Activated CD4-positive, alpha-beta T cell treated with anti-CD3 and anti-CD28 coated beads for 36 hours (primary cell): ENCODE measurements at regions of chr3 and their contacts with region 1.

Region 1: DNA sequence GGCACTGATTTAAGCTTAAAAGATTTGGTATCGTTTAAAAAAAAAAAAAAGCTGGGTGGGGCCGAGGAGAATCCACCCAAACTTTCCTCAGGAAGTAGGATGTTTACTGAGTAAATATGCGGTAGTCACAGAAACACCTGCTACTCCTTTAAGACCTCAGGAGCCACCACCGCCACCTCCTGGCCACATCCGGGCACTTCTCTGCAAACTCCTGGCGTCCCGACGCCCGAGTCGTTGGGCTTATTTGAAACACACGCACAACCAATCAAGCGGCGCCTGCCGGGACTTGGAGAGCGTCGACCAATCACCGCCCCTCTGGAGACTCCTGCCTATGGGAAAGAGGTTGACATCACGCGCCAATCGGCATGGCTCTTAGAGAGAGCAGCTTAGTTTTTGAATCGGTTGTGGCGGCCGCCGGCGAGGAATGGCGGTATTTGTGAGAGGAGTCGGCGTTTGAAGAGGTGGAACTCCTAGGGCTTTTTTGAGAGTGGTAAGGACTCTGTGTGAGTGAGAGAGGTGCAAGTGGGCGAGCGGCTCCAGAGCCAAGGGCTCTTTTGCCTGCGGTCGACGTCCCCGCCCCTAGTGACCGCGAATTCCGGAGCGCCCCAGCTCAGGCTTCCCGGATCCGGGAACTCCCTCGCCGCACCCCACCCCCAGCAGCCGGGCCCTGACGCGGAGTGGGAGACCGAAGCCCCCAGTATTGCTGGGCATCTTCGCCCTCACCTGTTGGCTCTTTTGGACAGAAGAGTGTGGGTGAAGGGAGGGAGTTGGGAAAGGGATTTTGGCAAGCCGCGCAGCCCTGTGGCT is at the start of gene ECT2:
- DNase-seq: peak; percentile 99
- ATAC-seq: peak; percentile 100
- H3K4me3 Mint-ChIP-seq: peak within 1 kb of the TSS; percentile 98
- H3K27ac Mint-ChIP-seq: peak within 1 kb of the TSS; percentile 99
- H3K4me1 Mint-ChIP-seq: peaks cover 21% of the 10 kb centered on the region
- H3K27me3 Mint-ChIP-seq: no peaks in the 10 kb centered on the region
- total RNA-seq, gene ECT2: 39.4 to 40.6 TPM

Region 2: GRCh38 chr3:170869645-170870593 is 1880.7 kb before region 1 on chr3 and contains the start of gene RPL22L1:
- CTCF ChIA-PET with region 1: no interaction called
- POLR2A ChIA-PET with region 1: no interaction called
- intact Hi-C with region 1: loop called in 1 of 2 experiments (anchors 2 kb)
- DNase-seq: peak; percentile 96
- ATAC-seq: peak; percentile 95
- H3K4me3 Mint-ChIP-seq: peak within 1 kb of the TSS; percentile 94
- H3K27ac Mint-ChIP-seq: peak within 1 kb of the TSS; percentile 99
- H3K4me1 Mint-ChIP-seq: peaks cover 15% of the 10 kb centered on the region
- H3K27me3 Mint-ChIP-seq: no peaks in the 10 kb centered on the region
- total RNA-seq, gene RPL22L1: 186 to 441 TPM

Region 3: GRCh38 chr3:170908235-170909116 is 1842.1 kb before region 1 on chr3 and contains the start of gene EIF5A2:
- CTCF ChIA-PET with region 1: no interaction called
- POLR2A ChIA-PET with region 1: no interaction called
- intact Hi-C with region 1: loop called in 1 of 2 experiments (anchors 5 kb)
- DNase-seq: peak; percentile 98
- ATAC-seq: peak; percentile 98
- H3K4me3 Mint-ChIP-seq: peak within 1 kb of the TSS; percentile 75
- H3K27ac Mint-ChIP-seq: peak within 1 kb of the TSS; percentile 91
- H3K4me1 Mint-ChIP-seq: peaks cover 16% of the 10 kb centered on the region
- H3K27me3 Mint-ChIP-seq: no peaks in the 10 kb centered on the region
- total RNA-seq, gene EIF5A2: 4.7 to 5.7 TPM

Region 4: DNA sequence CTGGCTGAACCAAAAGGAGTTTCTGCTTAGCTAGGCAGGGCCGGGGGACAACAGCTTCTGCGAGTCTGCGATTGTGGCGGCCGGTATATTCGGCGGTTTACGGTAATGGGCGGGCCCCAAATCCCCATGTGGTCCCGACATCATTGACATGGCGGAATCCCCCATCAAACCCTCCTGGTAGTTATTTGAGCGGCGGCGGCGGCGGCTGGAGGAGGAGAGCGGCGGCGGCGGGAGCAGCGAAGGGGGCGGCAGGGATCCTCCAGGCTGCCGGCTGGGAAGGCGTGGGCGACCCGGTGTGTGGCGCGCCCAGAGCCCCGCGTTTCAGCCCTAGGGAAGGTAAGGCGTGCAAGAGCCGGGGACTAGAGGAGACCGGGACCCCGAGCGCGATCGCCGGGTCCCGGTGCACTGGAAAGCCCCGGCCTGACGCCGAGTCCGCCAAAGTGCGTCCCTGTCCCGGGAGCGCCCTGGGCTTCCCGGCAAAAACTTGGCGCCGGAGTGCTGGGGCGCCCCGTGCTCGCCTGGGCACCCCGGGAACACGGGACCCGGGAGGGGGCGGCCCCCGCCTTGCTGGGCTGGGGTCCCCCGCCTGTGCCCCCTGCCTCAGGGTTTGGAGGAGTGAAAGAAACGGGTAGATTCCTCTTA is 711.0 kb before region 1 on chr3 and contains the start of gene FNDC3B:
- CTCF ChIA-PET with region 1: interaction called, 4 read pairs
- POLR2A ChIA-PET with region 1: no interaction called
- intact Hi-C with region 1: loop called in 1 of 2 experiments (anchors 5 kb)
- DNase-seq: peak; percentile 95
- ATAC-seq: peak; percentile 93
- H3K4me3 Mint-ChIP-seq: peak within 1 kb of the TSS; percentile 86
- H3K27ac Mint-ChIP-seq: peak within 1 kb of the TSS; percentile 88
- H3K4me1 Mint-ChIP-seq: peaks cover 24% of the 10 kb centered on the region
- H3K27me3 Mint-ChIP-seq: peaks cover 2% of the 10 kb centered on the region
- total RNA-seq, gene FNDC3B: 10.5 to 14.2 TPM

Region 5: GRCh38 chr3:172522871-172523818 is 227.4 kb before region 1 on chr3 and contains the start of gene TNFSF10:
- CTCF ChIA-PET with region 1: no interaction called
- POLR2A ChIA-PET with region 1: no interaction called
- intact Hi-C with region 1: loop called in 1 of 2 experiments (anchors 2 kb)
- DNase-seq: peak; percentile 81
- ATAC-seq: peak; percentile 80
- H3K4me3 Mint-ChIP-seq: peak within 1 kb of the TSS; percentile 91
- H3K27ac Mint-ChIP-seq: peak within 1 kb of the TSS; percentile 95
- H3K4me1 Mint-ChIP-seq: peaks cover 50% of the 10 kb centered on the region
- H3K27me3 Mint-ChIP-seq: no peaks in the 10 kb centered on the region
- total RNA-seq, gene TNFSF10: 33.1 to 34.8 TPM

Region 6: GRCh38 chr3:172673210-172673679 is 77.3 kb before region 1 on chr3:
- CTCF ChIA-PET with region 1: interaction called, 8 read pairs
- POLR2A ChIA-PET with region 1: no interaction called
- intact Hi-C with region 1: loop called (anchors 1 kb)
- DNase-seq: peak; percentile 85
- ATAC-seq: peak; percentile 94
- H3K4me3 Mint-ChIP-seq: no peak overlapping the region
- H3K27ac Mint-ChIP-seq: no peak overlapping the region
- H3K4me1 Mint-ChIP-seq: no peaks in the 10 kb centered on the region
- H3K27me3 Mint-ChIP-seq: no peaks in the 10 kb centered on the region

Region 7: GRCh38 chr3:172710664-172711453 is 39.7 kb before region 1 on chr3 and contains the start of gene NCEH1:
- CTCF ChIA-PET with region 1: interaction called, 11 read pairs
- POLR2A ChIA-PET with region 1: no interaction called
- intact Hi-C with region 1: loop called in 1 of 2 experiments (anchors 1 kb)
- DNase-seq: peak; percentile 86
- ATAC-seq: peak; percentile 99
- H3K4me3 Mint-ChIP-seq: peak within 1 kb of the TSS; percentile 94
- H3K27ac Mint-ChIP-seq: peak within 1 kb of the TSS; percentile 58
- H3K4me1 Mint-ChIP-seq: peaks cover 18% of the 10 kb centered on the region
- H3K27me3 Mint-ChIP-seq: no peaks in the 10 kb centered on the region
- total RNA-seq, gene NCEH1: 4.9 to 6.3 TPM